Transverse colon (tissue), 4 donors: ENCODE measurements at regions of chr18 and their contacts with region 1.

Region 1: DNA sequence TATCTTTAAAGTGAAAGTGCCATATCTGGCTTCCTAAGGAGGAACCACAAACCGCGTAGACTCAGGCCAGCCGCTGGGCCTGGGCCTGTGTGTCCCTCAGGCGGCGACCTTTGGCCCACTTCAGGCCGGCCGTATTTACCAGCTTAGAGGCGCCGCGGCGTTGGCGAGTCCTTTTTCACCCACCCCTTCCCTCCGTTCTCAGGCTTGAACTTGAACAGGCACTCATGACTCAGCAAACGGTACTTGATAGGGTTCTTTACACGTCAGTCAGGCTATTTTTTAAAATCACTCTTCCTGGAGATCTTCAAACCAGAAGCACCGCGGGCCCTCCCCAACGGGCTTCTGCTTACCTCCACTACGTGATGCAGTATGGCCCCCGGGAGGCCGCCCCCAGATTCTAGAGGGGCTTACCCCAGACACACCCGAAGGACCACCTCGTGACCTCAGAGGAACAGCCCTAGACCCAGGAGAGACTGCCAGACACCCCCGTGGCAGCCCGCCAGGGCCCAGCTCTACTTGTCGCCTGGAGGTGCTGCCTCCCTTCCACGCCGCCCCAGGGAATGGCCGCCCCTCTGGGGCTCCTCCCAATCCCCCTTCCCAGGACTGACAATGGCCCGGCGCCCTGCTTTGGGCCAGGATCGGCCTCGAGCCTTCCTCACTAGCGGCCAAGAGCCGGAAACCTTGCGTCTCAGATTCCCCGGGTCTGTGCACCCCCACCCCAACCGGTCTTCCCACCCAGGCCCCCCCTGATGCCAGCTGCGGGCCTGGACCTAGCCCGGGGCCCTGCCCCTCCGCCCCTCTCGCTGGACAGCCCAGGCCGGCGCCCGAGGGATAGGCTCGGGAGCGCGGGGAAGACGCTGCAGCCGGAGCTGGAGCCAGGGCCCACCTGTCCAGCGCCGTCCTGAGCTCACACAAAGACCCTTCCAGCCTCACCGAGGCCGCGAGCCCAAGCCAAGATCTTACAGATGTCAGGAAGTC is 33.8 kb upstream of the IMPA2 start:
- DNase-seq: peak; percentile 94
- H3K4me3 ChIP-seq: peak overlapping the region; percentile 22 to 58 (median 38)
- H3K27ac ChIP-seq: peak overlapping the region; percentile 93 to 96 (median 94)
- H3K4me1 ChIP-seq: peaks cover 10 to 25% (median 19%) of the 10 kb centered on the region in 4 donors
- H3K27me3 ChIP-seq: no peaks in the 10 kb centered on the region
- CTCF ChIP-seq: no peak
- EP300 ChIP-seq: peak; percentile 54
- POLR2A ChIP-seq: peak; percentile 61

Region 2: GRCh38 chr18:11980555-11981382 is 33.3 kb after region 1 on chr18:
- in situ Hi-C with region 1: no loop called
- intact Hi-C with region 1: loop called (anchors 2 kb)
- DNase-seq: peak; percentile 99
- H3K4me3 ChIP-seq: peak overlapping the region; percentile 66 to 94 (median 88)
- H3K27ac ChIP-seq: peak overlapping the region; percentile 97 to 99 (median 99)
- H3K4me1 ChIP-seq: peaks cover 10 to 36% (median 25%) of the 10 kb centered on the region in 4 donors
- H3K27me3 ChIP-seq: no peaks in the 10 kb centered on the region
- CTCF ChIP-seq: peak in 1 of 5 experiments; percentile 28
- EP300 ChIP-seq: no peak
- POLR2A ChIP-seq: peak; percentile 90

Region 3: DNA sequence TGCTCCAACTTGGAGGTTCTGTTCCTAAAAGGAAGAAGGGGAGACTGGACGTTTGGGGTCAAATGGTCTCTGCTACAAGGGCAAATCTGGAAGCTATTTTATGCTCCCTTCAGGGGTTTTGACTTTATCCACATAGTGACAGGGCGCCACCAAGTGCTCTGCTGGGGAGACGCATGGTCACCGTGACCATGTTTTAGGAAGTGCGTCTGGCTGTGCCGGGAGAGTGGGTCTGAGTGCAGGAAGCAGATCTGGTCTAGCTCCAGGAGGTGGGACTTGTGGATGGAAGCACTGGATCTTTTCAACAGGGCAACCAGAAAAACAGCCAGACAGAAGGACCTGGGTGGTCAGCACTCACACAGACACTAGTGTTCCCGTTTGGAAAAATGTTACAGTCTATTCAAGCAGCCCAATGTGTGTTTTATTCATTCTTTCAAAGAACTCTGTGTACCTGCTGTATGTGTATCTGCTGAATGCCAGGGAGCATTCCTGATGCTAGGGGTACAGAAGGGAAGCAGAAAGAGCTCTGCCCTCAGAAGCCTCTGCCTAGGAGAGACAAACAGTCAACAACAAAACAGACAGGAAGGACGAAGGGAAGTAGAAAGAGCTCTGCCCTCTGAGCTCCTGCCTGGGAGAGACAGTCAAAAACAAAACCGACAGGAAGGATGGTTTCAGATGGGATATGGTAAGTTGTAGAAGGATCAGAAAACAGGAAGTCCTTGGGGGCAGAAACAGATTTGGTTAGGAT is 48.1 kb after region 1 on chr18:
- in situ Hi-C with region 1: loop called in 2 of 4 experiments (anchors 10 kb)
- intact Hi-C with region 1: no loop called
- DNase-seq: peak; percentile 81
- H3K4me3 ChIP-seq: no peak overlapping the region
- H3K27ac ChIP-seq: peak overlapping the region; percentile 47 to 78 (median 66)
- H3K4me1 ChIP-seq: peaks cover 16 to 54% (median 27%) of the 10 kb centered on the region in 4 donors
- H3K27me3 ChIP-seq: no peaks in the 10 kb centered on the region
- CTCF ChIP-seq: peak; percentile 68 to 81 (median 73)
- EP300 ChIP-seq: no peak
- POLR2A ChIP-seq: no peak

Region 4: DNA sequence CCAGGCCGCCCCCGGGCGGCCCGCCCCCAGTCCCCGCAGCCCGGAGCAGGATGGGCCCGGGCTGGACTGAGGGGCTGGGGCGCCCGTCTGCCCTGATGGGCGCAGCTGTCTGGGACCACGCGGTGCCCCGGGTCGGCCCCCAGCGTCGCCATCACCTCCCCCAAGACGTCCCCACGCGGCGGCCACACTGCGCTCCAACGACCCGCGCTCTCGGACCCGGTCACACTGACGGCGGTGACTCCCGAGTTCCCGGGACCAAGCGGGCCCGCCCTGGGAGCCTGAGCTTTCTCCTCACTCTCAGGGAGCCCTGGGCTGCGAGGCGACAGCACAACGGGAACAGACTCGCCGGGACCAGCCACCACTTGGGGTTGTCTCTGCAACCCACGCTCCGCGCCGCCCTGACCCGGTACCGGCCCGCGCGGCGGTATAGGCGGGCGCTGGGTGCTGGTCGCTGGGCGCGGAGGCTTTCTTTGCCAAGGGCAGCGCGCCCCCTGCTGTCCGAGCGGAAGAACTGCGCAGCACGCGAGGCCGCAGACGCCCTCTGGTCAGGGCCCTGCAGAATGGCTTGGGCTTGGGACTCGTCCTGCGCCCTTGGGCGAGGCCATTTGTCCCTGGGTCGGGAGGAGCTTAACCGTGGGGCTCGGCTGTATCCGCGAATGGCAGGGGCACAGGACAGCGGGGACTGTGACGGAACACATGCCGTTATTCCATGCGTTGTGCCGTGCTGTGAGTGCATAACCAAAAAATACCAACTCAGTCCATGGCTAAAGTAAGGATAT is 91.3 kb after region 1 on chr18:
- in situ Hi-C with region 1: loop called in 1 of 4 experiments (anchors 10 kb)
- intact Hi-C with region 1: no loop called
- DNase-seq: peak; percentile 89
- H3K4me3 ChIP-seq: peak overlapping the region; percentile 3 to 65 (median 43)
- H3K27ac ChIP-seq: peak overlapping the region in 3 of 4 donors; percentile 4 to 36 (median 33)
- H3K4me1 ChIP-seq: peaks cover 0 to 12% (median 10%) of the 10 kb centered on the region in 4 donors
- H3K27me3 ChIP-seq: no peaks in the 10 kb centered on the region
- CTCF ChIP-seq: peak; percentile 98 to 99 (median 98)
- EP300 ChIP-seq: no peak
- POLR2A ChIP-seq: no peak

Region 5: DNA sequence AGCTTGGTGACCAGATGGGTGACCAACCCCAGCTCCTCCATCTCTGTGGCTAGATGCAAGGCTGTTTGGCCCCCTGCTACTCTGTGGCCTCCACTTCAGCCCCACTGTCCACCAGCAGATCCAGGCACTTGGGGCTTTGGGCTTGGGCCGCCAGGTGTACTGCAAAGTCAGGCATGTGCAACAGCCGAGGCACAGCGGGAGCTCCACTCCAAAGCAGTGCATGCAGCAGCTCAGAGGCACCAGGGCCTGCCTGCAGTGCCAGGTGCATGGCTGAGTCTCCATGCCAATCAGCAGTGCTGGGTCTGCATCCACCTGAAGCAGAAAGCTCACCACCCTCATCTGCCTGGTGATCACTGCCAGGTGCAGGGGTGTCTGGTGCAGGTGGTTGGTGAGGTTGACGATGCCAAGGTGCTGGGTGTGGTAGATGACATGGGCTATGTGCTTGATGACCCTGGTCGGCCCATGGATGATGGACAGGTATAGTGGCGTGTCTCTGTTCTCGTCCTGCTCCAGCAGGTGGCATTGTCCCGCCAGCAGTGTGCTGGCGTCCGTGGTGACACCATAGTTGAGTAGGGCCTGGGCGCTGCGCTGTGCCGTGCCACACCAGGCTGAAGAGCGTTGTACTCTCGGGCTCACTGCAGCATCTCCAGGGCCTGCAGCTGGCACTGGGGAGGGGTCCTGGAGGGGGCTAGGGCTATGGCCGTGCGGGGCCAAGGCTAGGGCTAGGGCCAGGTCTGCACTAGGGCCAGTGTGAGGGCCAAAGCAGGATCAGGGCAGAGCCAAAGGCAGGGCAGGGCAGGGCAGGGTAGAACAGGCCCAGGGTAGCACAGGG is 145.1 kb after region 1 on chr18:
- in situ Hi-C with region 1: no loop called
- intact Hi-C with region 1: no loop called
- DNase-seq: peak; percentile 63
- H3K4me3 ChIP-seq: no peak overlapping the region
- H3K27ac ChIP-seq: no peak overlapping the region
- H3K4me1 ChIP-seq: no peaks in the 10 kb centered on the region
- H3K27me3 ChIP-seq: no peaks in the 10 kb centered on the region
- CTCF ChIP-seq: peak; percentile 29 to 68 (median 46)
- EP300 ChIP-seq: no peak
- POLR2A ChIP-seq: no peak